Naive thymus-derived CD8-positive, alpha-beta T cell (primary cell): ENCODE measurements at regions of chr1 and their contacts with region 1.

Region 1: DNA sequence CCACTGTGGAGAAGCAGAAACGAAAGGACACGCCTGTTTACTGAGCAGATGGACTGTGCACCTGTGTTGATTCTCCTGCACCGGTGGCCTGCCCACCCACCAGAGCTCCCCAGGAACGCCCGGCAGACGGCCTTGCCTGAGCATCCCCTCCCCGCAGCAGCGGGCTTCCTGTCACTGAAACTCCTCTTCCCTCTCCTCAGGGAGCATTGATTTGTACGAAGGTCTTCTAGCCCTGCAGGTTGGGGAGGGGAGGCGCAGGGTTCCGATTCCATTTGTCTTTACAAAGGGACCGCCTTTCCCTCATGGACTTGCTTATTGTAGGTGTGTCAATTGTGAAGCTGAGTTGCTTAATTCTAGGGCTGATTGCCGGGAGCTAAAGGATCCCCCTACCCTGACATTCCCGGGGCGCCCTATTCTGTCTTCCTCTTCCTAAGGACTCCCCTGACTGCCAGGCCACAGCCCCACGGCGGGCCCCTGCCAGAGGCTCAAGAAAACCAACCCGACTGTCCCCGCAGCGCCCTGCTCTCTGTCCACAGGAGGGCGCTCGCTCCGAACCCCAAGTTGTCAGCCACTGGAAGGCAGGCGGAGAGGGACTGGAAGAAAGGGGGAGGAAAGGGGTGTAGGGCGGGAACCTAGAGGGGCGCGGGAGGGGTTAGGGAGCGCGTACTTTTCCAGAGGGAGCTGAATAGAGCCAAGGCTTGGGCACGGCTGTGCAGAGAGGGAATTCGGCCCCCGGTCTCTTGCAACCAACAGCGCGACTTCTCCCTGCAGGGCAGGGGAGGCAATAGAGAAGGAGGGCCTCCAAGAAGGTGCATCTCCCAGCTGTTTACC is 2.8 kb downstream of the S100A6 start:
- DNase-seq: peak; percentile 65 to 85 (median 72)
- ATAC-seq: peak; percentile 12 to 30
- H3K4me3 Mint-ChIP-seq: peak overlapping the region; percentile 66 to 97 (median 92)
- H3K27ac Mint-ChIP-seq: peak overlapping the region; percentile 84 to 98 (median 94)
- H3K4me1 Mint-ChIP-seq: peaks cover 35 to 68% (median 59%) of the 10 kb centered on the region in 4 donors
- H3K27me3 Mint-ChIP-seq: no peaks in the 10 kb centered on the region

Region 2: DNA sequence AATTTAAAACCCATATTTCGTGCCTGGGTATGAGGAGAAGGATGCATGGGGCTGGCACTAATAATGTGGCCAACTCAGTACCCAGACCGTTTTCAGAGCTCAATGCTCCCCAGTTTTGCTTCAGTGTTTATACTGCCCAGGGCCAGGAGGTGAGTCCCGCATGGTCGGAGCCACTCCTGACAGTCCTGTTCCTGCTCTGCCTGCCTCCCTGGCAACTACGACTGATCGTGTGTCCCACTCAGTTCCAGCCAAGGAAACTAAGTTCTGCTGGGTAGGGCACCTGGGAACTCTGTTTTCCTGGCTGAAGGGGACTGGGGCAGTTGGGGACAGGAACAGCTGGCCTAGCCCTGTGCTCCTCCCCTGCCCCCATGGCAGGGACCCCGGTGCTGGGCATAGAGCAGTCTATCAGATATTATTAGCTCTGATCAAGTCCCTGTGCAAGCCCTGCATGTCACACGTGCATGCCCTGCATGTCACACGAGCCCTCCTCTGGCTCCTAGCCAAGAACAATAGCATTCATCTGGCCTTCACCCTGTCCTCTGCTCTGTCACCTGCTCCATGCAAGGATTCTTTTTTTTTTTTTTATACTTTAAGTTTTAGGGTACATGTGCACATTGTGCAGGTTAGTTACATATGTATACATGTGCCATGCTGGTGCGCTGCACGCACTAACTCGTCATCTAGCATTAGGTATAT is 91.6 kb before region 1 on chr1:
- POLR2A ChIA-PET with region 1: no interaction called
- DNase-seq: no peak
- ATAC-seq: no peak
- H3K4me3 Mint-ChIP-seq: no peak overlapping the region
- H3K27ac Mint-ChIP-seq: no peak overlapping the region
- H3K4me1 Mint-ChIP-seq: no peaks in the 10 kb centered on the region
- H3K27me3 Mint-ChIP-seq: peaks cover 19 to 58% (median 31%) of the 10 kb centered on the region in 5 donors

Region 3: GRCh38 chr1:153510984-153511410 is 22.0 kb before region 1 on chr1:
- POLR2A ChIA-PET with region 1: interaction called, 13 read pairs
- DNase-seq: peak; percentile 63 to 88 (median 75)
- ATAC-seq: peak; percentile 83 to 98
- H3K4me3 Mint-ChIP-seq: no peak overlapping the region
- H3K27ac Mint-ChIP-seq: peak overlapping the region in 3 of 10 donors; percentile 24 to 34 (median 29)
- H3K4me1 Mint-ChIP-seq: peaks cover 0 to 6% (median 3%) of the 10 kb centered on the region in 4 donors
- H3K27me3 Mint-ChIP-seq: no peaks in the 10 kb centered on the region

Region 4: DNA sequence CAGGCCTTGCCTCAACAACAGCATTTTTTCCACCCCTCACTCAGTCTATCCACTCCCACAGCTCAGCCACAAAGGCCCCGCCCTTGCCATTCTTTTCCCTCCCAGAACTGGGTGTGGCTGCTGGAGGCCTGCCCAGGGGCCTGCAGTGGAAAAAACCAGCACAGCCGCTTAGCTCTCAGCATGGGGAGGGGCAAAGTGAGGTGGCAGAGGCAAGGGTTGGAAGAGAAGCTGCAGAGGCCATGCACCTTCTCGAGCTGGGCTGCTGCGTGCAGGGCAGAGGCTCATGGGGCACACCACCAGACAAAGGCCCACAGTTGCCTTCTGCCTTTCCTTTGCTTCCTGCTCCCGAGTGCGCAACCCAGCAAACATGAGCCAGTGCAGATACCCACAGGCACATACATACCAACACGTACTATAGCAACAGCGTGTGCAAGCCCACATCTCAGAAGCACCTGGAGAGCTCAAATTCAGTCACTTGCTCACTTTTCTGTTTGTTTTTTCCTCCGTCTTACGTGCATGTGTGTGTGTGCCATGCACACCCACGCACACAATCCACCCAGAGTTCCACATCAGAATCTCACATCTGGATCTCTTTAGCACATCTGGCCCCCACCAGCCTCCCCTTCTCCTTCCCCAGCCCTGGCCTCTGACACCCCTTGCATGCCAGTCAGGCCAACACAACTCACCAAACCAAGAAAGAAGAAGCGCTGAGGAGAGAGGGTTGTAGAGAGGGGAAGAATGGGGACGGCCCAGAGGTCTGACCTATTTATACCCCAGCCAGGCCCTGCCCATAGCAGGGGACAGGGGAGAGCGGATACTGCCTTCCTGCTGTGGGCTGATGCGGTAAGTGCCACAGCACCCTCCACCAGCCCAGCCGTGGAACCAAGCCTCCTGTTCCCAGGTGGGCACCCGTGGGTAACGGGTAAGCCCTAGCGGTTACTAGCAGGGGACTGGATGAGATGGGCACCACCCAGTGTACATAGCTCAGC is 12.4 kb after region 1 on chr1 and contains the start of gene S100A4:
- POLR2A ChIA-PET with region 1: interaction called, 340 read pairs
- DNase-seq: peak; percentile 57 to 93 (median 78)
- ATAC-seq: peak; percentile 77 to 82
- H3K4me3 Mint-ChIP-seq: peak within 1 kb of the TSS; percentile 88 to 97 (median 92)
- H3K27ac Mint-ChIP-seq: peak within 1 kb of the TSS; percentile 96 to 99 (median 97)
- H3K4me1 Mint-ChIP-seq: peaks cover 54 to 82% (median 75%) of the 10 kb centered on the region in 4 donors
- H3K27me3 Mint-ChIP-seq: no peaks in the 10 kb centered on the region
- polyA plus RNA-seq, gene S100A4: 421 to 1,131 (median 581) TPM

Region 5: DNA sequence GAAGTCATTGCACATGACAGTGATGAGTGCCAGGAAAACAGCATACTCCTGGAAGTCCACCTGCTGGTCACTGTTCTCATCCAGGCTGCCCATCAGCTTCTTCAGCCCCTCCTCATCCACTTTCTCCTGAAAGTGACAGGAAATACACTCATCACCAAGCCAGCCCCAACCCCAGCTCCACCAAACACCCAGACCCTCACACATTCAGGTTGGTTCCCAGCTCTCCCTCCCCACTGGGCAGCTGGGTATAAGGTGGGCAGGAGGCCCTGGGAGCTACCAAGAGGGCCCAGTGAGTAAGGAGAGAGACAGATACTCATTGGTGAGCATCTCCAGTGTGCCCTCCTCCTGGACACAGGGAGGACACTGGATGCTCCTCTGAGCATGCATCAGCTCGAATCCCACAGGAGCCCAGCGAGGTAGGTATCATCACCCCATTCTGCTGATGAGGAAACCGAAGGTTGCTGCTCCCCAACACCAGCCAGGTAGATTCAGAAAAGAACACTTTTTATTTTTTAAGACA is 28.5 kb after region 1 on chr1:
- POLR2A ChIA-PET with region 1: interaction called, 25 read pairs
- DNase-seq: no peak
- ATAC-seq: no peak
- H3K4me3 Mint-ChIP-seq: no peak overlapping the region
- H3K27ac Mint-ChIP-seq: peak overlapping the region in 1 of 10 donors; percentile 9
- H3K4me1 Mint-ChIP-seq: peaks cover 4 to 13% (median 9%) of the 10 kb centered on the region in 4 donors
- H3K27me3 Mint-ChIP-seq: no peaks in the 10 kb centered on the region

Region 6: DNA sequence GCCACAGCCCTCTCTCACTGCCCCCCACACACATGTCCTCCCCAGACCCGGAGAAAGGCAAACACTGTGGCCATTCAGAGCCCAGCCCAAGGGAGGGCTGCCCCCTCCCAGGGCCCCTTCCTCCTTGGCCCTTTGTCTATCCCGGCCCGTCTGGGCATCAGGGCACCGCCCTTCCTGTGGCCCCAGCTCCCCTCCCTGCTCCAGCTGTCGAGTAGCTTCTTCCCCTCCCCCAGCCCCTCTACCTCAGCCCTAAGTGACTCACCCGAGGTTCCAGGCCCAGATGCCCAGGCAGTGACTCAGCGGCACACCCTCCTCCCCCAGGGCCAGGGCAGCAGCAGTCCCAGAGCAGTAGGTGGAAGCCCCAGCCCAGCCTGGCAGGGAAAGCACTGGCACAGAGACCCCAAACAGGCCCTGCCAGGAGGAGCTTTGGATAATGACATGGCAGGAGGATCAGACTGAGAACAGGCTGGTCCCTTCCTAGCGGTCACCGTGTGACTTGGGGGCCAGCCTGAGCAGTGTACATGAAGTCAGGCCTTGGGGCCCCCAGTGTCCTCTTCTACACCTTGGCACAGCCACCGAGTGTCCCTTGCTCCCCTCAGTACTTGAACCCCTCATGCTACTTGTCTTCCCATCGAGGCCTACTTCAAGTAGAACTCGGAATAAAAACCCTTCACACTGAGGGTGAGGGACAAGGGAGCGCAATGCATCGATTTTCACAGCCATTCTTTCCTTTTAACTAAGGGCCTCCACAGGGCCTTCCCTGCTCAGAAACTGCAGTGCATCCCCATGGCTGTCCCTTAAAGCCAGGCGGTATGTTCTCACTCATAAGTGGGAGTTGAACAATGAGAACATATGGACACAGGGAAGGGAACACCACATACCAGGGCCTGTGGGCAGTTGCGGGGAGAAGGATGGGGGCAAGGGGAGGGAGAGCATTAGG is 33.7 kb after region 1 on chr1:
- POLR2A ChIA-PET with region 1: interaction called, 44 read pairs
- DNase-seq: peak in 4 of 10 donors; percentile 21 to 81 (median 52)
- ATAC-seq: peak; percentile 62 to 85
- H3K4me3 Mint-ChIP-seq: peak overlapping the region in 6 of 10 donors; percentile 9 to 71 (median 52)
- H3K27ac Mint-ChIP-seq: peak overlapping the region in 8 of 10 donors; percentile 40 to 96 (median 68)
- H3K4me1 Mint-ChIP-seq: peaks cover 16 to 33% (median 30%) of the 10 kb centered on the region in 4 donors
- H3K27me3 Mint-ChIP-seq: peaks cover 0 to 9% (median 2%) of the 10 kb centered on the region in 5 donors

Region 7: GRCh38 chr1:153572569-153573015 is 39.6 kb after region 1 on chr1:
- POLR2A ChIA-PET with region 1: interaction called, 44 read pairs
- DNase-seq: peak in 9 of 10 donors; percentile 25 to 77 (median 39)
- ATAC-seq: peak; percentile 82 to 87
- H3K4me3 Mint-ChIP-seq: no peak overlapping the region
- H3K27ac Mint-ChIP-seq: peak overlapping the region in 2 of 10 donors; percentile 9 to 10
- H3K4me1 Mint-ChIP-seq: peaks cover 10 to 20% (median 13%) of the 10 kb centered on the region in 4 donors
- H3K27me3 Mint-ChIP-seq: peaks cover 2 to 18% (median 4%) of the 10 kb centered on the region in 5 donors

Region 8: GRCh38 chr1:153633716-153634665 is 101.0 kb after region 1 on chr1 and contains the start of gene CHTOP:
- POLR2A ChIA-PET with region 1: interaction called, 29 read pairs
- DNase-seq: peak; percentile 87 to 99 (median 96)
- ATAC-seq: peak; percentile 87 to 89
- H3K4me3 Mint-ChIP-seq: peak within 1 kb of the TSS; percentile 94 to 100 (median 100)
- H3K27ac Mint-ChIP-seq: peak within 1 kb of the TSS; percentile 98 to 100 (median 100)
- H3K4me1 Mint-ChIP-seq: peaks cover 12 to 47% (median 39%) of the 10 kb centered on the region in 4 donors
- H3K27me3 Mint-ChIP-seq: no peaks in the 10 kb centered on the region
- polyA plus RNA-seq, gene CHTOP: 45.2 to 74.7 (median 48.8) TPM

Region 9: DNA sequence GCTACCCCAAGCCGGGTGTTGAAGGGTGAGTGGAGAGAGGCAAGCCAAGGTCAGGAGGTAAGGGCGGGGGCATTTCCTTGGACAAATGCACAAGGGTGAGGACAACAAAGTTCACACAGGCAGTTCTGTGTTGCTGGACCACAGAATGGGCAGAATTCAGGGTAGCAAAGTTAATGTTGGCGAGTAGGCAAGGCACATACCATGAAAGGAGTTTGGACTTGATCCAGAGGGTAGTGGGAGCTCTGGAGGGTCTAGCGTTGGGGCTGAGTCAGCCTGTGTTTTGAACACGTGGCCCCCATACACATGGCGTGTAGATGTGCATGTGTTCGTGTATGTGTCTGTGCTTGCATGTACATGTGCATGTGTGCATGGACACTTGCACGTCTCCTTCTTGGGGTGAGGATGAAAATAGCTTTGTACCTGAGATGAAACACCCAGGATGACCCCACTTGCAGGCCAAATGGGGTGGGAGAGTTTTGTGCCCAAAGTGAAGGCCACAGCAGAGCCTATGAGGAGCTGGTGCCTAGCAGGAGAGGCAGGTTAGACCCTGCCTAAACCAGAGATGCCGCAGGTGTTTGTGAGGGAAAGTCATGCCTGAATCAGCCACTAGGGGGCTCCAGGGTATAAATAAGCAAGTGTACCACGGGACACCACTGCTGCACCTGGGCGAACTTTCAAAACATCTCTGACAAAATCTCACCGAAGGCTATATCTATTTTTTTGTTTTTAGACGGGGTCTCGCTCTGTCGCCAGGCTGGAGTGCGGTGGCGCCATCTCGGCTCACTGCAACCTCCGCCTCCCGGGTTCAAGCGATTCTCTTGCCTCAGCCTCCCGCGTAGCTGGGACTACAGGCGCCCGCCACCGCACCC is 264.0 kb after region 1 on chr1:
- POLR2A ChIA-PET with region 1: no interaction called
- DNase-seq: peak; percentile 70 to 92 (median 81)
- ATAC-seq: peak; percentile 92 to 93
- H3K4me3 Mint-ChIP-seq: peak overlapping the region in 4 of 10 donors; percentile 3 to 40 (median 32)
- H3K27ac Mint-ChIP-seq: peak overlapping the region in 9 of 10 donors; percentile 13 to 83 (median 65)
- H3K4me1 Mint-ChIP-seq: peaks cover 13 to 32% (median 26%) of the 10 kb centered on the region in 4 donors
- H3K27me3 Mint-ChIP-seq: no peaks in the 10 kb centered on the region